Transverse colon (tissue), 4 donors: ENCODE measurements at regions of chr19 and their contacts with region 1.

Region 1: DNA sequence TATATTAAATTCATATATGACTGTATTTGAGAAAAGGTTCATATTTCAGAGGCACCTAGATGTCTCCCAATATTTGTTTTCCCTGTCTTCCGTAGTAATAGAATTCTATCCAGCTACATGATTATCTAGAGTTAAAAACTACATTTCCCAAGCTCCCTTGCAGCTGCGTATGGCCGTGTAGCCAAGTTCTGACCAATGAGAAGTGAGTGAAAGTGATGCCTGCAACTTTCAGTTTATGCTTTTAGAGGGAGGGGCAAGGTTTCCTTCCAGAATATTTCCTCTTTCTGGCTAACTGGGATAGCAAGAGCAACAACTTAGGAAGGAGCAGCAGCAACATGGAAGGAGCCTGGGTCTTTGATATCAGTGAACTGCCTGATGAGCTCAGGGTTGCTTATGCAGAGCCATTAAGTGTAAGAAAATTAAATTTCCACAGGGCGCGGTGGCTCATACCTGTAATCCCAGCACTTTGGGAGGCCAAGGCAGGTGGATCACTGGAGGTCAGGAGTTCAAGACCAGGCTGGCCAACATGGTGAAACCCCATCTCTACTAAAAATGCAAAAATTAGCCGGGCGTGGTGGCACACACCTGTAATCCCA is 23.2 kb upstream of the CYP2A13 start:
- DNase-seq: no peak
- H3K4me3 ChIP-seq: no peak overlapping the region
- H3K27ac ChIP-seq: no peak overlapping the region
- H3K4me1 ChIP-seq: no peaks in the 10 kb centered on the region
- H3K27me3 ChIP-seq: peaks cover 11% of the 10 kb centered on the region
- CTCF ChIP-seq: no peak
- EP300 ChIP-seq: no peak
- POLR2A ChIP-seq: no peak

Region 2: GRCh38 chr19:40378509-40378908 is 686.6 kb before region 1 on chr19:
- in situ Hi-C with region 1: no loop called
- intact Hi-C with region 1: loop called (anchors 5 kb)
- DNase-seq: no peak
- H3K4me3 ChIP-seq: no peak overlapping the region
- H3K27ac ChIP-seq: no peak overlapping the region
- H3K4me1 ChIP-seq: no peaks in the 10 kb centered on the region
- H3K27me3 ChIP-seq: no peaks in the 10 kb centered on the region
- CTCF ChIP-seq: no peak
- EP300 ChIP-seq: no peak
- POLR2A ChIP-seq: no peak

Region 3: GRCh38 chr19:40908976-40909375 is 156.1 kb before region 1 on chr19:
- in situ Hi-C with region 1: no loop called
- intact Hi-C with region 1: no loop called
- DNase-seq: no peak
- H3K4me3 ChIP-seq: peak overlapping the region in 2 of 4 donors; percentile 8 to 25
- H3K27ac ChIP-seq: peak overlapping the region in 1 of 4 donors; percentile 10
- H3K4me1 ChIP-seq: peaks cover 0 to 8% (median 3%) of the 10 kb centered on the region in 4 donors
- H3K27me3 ChIP-seq: peaks cover 20% of the 10 kb centered on the region
- CTCF ChIP-seq: peak in 1 of 5 experiments; percentile 29
- EP300 ChIP-seq: no peak
- POLR2A ChIP-seq: no peak